ENCODE measurements at regions of chr1 and their contacts with region 1.

Region 1: GRCh38 chr1:16055613-16056520 is 12.3 kb downstream of the CLCNKB start:
- DNase-seq: peak; percentile 89 to 93 (median 90)
- H3K4me3 ChIP-seq: no peak overlapping the region
- H3K27ac ChIP-seq: no peak overlapping the region
- H3K4me1 ChIP-seq: peaks cover 0 to 13% (median 8%) of the 10 kb centered on the region in 4 experiments
- H3K27me3 ChIP-seq: no peaks in the 10 kb centered on the region

Region 2: DNA sequence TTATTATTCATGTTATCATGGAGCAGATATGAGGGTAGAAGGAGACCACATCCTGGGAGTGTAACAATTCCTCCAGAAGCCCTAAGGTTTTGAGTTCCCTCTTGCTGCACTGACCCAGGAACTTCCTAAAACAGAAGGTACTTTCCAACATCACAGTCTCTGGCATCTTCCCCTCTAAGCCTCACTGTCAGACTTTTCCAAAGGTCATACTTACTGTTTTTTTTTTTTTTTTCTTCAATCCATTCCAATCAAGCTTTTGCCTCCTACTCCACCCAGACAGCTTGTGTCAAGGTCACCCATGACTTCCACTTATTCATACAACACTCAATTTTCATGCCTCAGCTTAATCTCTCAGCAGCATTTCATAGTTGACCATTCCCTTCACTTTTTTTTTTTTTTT is 230.1 kb before region 1 on chr1:
- CTCF ChIA-PET with region 1: no interaction called
- POLR2A ChIA-PET with region 1: no interaction called
- DNase-seq: peak in 1 of 3 donors; percentile 26
- H3K4me3 ChIP-seq: no peak overlapping the region
- H3K27ac ChIP-seq: no peak overlapping the region
- H3K4me1 ChIP-seq: peaks cover 16 to 21% (median 18%) of the 10 kb centered on the region in 4 experiments
- H3K27me3 ChIP-seq: no peaks in the 10 kb centered on the region

Region 3: DNA sequence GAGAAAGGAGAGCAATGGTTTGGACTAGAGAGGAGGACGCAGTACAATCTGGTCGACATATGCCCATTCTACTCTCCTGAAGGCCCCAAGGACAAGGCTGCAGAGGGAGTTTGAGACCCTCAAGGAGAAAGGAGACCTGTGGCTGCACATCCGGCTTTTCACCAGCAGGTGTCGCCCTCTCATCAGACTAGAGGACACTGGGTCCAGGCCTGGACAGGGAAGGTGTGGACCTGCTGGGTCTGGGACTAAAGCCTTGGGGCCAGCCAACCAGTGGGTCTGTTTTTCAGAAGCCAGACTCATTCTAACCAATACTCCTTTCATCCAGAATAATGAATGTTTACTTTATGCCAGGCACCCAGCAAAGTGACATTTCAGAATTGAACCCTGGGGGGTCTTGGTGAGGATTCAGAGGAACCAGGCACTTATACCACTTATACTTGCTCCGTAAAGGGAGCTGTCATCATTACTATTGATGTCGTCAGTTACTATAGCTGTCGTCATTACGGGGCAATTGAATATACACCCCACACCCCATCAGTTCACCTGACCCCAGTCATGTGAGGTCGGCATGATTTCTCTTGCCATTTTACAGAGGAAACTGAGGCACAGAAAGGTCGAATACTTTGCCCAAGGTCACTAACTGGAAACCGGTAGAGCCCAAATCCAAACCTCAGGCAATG is 46.7 kb before region 1 on chr1:
- CTCF ChIA-PET with region 1: interaction called, 18 read pairs
- POLR2A ChIA-PET with region 1: no interaction called
- DNase-seq: peak; percentile 63 to 77 (median 65)
- H3K4me3 ChIP-seq: no peak overlapping the region
- H3K27ac ChIP-seq: no peak overlapping the region
- H3K4me1 ChIP-seq: peaks cover 0 to 17% (median 15%) of the 10 kb centered on the region in 4 experiments
- H3K27me3 ChIP-seq: peaks cover 0 to 2% (median 0%) of the 10 kb centered on the region in 5 experiments

Region 4: GRCh38 chr1:16032388-16033103 is 23.3 kb before region 1 on chr1:
- CTCF ChIA-PET with region 1: interaction called, 10 read pairs
- POLR2A ChIA-PET with region 1: interaction called, 5 read pairs
- DNase-seq: peak; percentile 86 to 89 (median 89)
- H3K4me3 ChIP-seq: no peak overlapping the region
- H3K27ac ChIP-seq: no peak overlapping the region
- H3K4me1 ChIP-seq: no peaks in the 10 kb centered on the region
- H3K27me3 ChIP-seq: peaks cover 0 to 16% (median 0%) of the 10 kb centered on the region in 5 experiments

Region 5: GRCh38 chr1:16043521-16043920 is 12.3 kb before region 1 on chr1 and contains the start of gene CLCNKB:
- CTCF ChIA-PET with region 1: interaction called, 14 read pairs
- POLR2A ChIA-PET with region 1: no interaction called
- DNase-seq: no peak
- H3K4me3 ChIP-seq: no peak within 1 kb of the TSS
- H3K27ac ChIP-seq: no peak within 1 kb of the TSS
- H3K4me1 ChIP-seq: peaks cover 0 to under 1% (median under 1%) of the 10 kb centered on the region in 4 experiments
- H3K27me3 ChIP-seq: no peaks in the 10 kb centered on the region